PC-9 (cell line): ENCODE measurements at regions of chr6 and their contacts with region 1.

Region 1: DNA sequence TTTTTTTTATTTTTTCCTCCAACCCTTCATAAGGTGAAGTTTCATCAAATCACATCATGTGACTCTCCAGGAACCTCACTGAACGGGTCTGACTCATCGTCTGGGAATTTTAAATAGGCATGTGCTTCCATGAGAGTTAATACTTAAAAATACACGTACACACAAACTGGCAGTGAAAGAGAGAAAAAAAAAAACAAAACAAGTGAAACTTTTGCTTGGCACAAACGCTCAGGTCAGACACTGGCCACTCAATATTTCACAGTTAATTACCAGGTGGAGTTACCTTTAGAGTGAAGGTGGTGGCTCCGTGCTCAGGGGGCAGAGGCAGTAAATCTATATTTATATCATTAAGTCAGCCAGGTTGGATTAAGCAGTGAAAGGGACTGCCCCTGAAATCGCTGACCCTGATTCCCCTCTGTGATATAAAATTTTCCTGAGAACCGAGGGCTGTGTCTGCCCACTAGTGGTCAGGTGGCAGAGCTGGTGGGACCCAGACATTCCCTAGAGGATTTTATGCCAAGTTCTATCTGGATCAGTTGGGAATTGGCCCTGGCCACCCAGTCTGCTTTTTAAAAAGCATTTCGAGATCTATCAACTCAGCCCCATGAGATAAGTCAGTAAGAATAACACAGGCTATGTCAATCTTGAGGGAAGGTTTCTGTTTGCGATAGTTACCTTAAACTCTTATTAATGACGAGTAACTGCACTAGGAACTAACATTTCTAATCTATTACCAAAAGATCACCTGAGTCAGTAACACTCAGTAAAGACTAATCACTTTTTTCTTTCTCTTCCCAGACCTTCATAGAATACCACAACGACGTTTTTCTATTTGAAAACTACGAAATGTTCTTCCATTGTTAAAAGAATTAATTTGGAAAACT is 259.1 kb downstream of the HDGFL1 start:
- DNase-seq: peak; percentile 71 to 97
- H3K4me3 ChIP-seq: peak overlapping the region; percentile 27
- H3K27ac ChIP-seq: peak overlapping the region; percentile 83
- H3K4me1 ChIP-seq: peaks cover 37% of the 10 kb centered on the region
- H3K27me3 ChIP-seq: no peaks in the 10 kb centered on the region
- CTCF ChIP-seq: peak; percentile 77

Region 2: DNA sequence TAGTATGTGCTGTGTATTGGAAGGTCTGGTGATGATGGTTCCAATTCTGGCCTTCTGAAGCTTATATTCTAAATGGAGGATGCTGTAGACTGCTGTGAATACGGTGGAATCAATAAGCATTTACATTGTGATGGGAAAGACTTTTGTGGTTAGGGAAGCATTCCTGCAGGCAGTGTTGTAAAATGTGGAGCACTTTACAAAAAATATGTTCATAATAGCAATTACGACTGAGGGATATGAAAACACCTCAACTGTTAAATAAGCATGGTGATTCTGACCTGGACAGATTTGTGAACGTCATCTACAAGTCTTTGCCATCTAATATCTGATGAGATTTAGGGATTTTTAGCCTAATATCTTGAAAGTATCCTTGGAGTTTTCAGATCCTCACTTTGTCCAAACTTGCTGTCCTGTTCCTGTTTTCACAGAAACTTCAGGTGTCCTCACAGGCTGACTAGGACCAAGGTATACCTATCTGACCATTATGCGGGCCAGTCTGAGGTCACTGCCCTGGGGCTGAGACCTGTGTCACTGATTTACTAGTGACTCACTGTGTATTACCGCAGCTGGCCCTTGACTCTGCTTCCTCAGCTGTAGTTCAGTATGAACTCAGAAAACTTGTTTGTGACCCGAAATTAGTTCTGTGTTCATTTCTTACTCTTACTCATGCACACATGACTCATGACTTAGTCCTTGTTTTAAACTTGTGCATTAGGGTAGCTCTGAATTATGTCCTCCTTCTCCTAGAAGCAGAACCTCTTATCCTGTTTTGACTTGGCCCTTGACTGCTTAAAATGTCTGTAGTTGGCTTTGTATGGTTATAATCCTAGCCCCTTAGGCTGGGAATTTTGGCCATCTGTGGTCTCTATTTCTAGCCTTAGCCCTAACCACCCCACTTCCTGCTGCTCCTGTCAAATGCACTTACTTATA is 1951.1 kb before region 1 on chr6:
- CTCF ChIA-PET with region 1: no interaction called
- POLR2A ChIA-PET with region 1: no interaction called
- intact Hi-C with region 1: loop called (anchors 2 kb)
- DNase-seq: peak; percentile 89 to 99
- H3K4me3 ChIP-seq: 0 out of 2 replicates have a peak overlapping the region, but pooled peaks have one; percentile 0
- H3K27ac ChIP-seq: peak overlapping the region; percentile 90
- H3K4me1 ChIP-seq: peaks cover 42% of the 10 kb centered on the region
- H3K27me3 ChIP-seq: no peaks in the 10 kb centered on the region
- CTCF ChIP-seq: no peak

Region 3: GRCh38 chr6:21220271-21220987 is 1608.0 kb before region 1 on chr6:
- CTCF ChIA-PET with region 1: no interaction called
- POLR2A ChIA-PET with region 1: no interaction called
- intact Hi-C with region 1: loop called (anchors 2 kb)
- DNase-seq: peak; percentile 63 to 98
- H3K4me3 ChIP-seq: peak overlapping the region; percentile 28; the same call in 1 of the 2 replicates
- H3K27ac ChIP-seq: peak overlapping the region; percentile 95
- H3K4me1 ChIP-seq: peaks cover 30% of the 10 kb centered on the region
- H3K27me3 ChIP-seq: no peaks in the 10 kb centered on the region
- CTCF ChIP-seq: no peak

Region 4: DNA sequence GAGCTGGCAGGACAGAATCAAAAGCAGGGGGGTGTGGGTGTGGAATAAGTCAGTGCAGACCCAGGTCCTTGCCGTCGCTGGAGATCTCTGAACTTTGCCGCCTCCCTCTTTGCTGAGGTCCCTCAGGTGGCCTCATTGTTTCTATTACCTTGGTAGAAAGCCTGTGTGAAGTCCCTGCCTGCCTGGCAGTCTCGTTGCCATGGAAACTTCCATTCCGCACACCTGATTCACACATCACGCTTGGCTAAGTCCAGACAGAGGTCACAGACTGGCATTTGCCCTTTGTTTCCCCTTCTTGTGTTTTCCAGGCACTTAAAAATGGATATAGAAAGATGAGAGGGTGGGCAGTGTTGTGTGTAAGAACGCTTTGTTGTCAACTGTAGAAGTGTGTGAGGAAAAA is 792.1 kb before region 1 on chr6:
- CTCF ChIA-PET with region 1: no interaction called
- POLR2A ChIA-PET with region 1: no interaction called
- intact Hi-C with region 1: loop called (anchors 5 kb)
- DNase-seq: peak; percentile 84 to 91
- H3K4me3 ChIP-seq: peak overlapping the region; percentile 18; the same call in 1 of the 2 replicates
- H3K27ac ChIP-seq: peak overlapping the region; percentile 34; the same call in 1 of the 2 replicates
- H3K4me1 ChIP-seq: peaks cover 22% of the 10 kb centered on the region
- H3K27me3 ChIP-seq: no peaks in the 10 kb centered on the region
- CTCF ChIP-seq: no peak

Region 5: GRCh38 chr6:22236626-22237414 is 591.6 kb before region 1 on chr6:
- CTCF ChIA-PET with region 1: no interaction called
- POLR2A ChIA-PET with region 1: no interaction called
- intact Hi-C with region 1: loop called (anchors 5 kb)
- DNase-seq: peak; percentile 62 to 84
- H3K4me3 ChIP-seq: 0 out of 2 replicates have a peak overlapping the region, but pooled peaks have one; percentile 3
- H3K27ac ChIP-seq: peak overlapping the region; percentile 27
- H3K4me1 ChIP-seq: peaks cover 21% of the 10 kb centered on the region
- H3K27me3 ChIP-seq: no peaks in the 10 kb centered on the region
- CTCF ChIP-seq: no peak

Region 6: GRCh38 chr6:22892452-22892851 is 64.0 kb after region 1 on chr6:
- CTCF ChIA-PET with region 1: interaction called, 3 read pairs
- POLR2A ChIA-PET with region 1: interaction called, 3 read pairs
- intact Hi-C with region 1: loop called (anchors 1 kb)
- DNase-seq: peak; percentile 53 to 89
- H3K4me3 ChIP-seq: no peak overlapping the region
- H3K27ac ChIP-seq: peak overlapping the region; percentile 90
- H3K4me1 ChIP-seq: peaks cover 25% of the 10 kb centered on the region
- H3K27me3 ChIP-seq: no peaks in the 10 kb centered on the region
- CTCF ChIP-seq: no peak

Region 7: GRCh38 chr6:23031986-23032385 is 203.6 kb after region 1 on chr6:
- CTCF ChIA-PET with region 1: no interaction called
- POLR2A ChIA-PET with region 1: no interaction called
- intact Hi-C with region 1: no loop called
- DNase-seq: no peak
- H3K4me3 ChIP-seq: no peak overlapping the region
- H3K27ac ChIP-seq: no peak overlapping the region
- H3K4me1 ChIP-seq: no peaks in the 10 kb centered on the region
- H3K27me3 ChIP-seq: no peaks in the 10 kb centered on the region
- CTCF ChIP-seq: no peak

Region 8: DNA sequence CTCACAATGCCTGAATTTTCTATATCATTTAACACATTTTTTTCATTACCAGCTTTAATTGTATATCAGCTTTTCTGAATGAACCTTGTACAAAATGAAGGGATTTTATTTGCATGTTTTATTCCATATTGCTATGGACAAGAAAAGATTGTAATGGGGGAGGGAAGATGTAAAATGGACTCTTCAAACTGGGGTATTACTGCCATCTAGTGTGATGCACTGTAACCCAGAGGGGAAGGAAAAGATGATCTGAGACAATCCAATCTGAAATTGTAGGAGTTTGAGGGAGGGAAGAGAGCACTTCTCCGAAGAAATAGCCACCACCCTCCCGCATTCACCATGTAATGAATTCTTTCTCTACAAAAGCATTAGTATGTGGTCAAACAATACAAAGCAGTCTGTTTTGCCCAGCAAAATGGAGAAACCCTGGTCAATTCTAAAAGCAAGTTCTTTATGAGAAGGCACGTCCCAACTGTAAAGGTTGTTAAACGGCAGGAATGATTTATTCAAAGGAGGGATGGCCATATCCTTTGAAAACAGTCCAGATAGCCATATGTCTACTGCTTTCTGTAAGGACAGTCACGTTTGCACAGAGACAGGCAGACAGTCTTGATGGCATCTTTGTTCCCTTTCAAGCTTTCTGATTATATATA is 618.1 kb after region 1 on chr6:
- CTCF ChIA-PET with region 1: no interaction called
- POLR2A ChIA-PET with region 1: no interaction called
- intact Hi-C with region 1: loop called (anchors 5 kb)
- DNase-seq: peak in 1 of 2 experiments; percentile 3
- H3K4me3 ChIP-seq: no peak overlapping the region
- H3K27ac ChIP-seq: no peak overlapping the region
- H3K4me1 ChIP-seq: no peaks in the 10 kb centered on the region
- H3K27me3 ChIP-seq: no peaks in the 10 kb centered on the region
- CTCF ChIP-seq: peak; percentile 57; the same call in 1 of the 2 replicates